Activated B cell treated with CpG ODN at 0.5 μM for 24 hours (primary cell): ENCODE measurements at regions of chr11 and their contacts with region 1.

Region 1: DNA sequence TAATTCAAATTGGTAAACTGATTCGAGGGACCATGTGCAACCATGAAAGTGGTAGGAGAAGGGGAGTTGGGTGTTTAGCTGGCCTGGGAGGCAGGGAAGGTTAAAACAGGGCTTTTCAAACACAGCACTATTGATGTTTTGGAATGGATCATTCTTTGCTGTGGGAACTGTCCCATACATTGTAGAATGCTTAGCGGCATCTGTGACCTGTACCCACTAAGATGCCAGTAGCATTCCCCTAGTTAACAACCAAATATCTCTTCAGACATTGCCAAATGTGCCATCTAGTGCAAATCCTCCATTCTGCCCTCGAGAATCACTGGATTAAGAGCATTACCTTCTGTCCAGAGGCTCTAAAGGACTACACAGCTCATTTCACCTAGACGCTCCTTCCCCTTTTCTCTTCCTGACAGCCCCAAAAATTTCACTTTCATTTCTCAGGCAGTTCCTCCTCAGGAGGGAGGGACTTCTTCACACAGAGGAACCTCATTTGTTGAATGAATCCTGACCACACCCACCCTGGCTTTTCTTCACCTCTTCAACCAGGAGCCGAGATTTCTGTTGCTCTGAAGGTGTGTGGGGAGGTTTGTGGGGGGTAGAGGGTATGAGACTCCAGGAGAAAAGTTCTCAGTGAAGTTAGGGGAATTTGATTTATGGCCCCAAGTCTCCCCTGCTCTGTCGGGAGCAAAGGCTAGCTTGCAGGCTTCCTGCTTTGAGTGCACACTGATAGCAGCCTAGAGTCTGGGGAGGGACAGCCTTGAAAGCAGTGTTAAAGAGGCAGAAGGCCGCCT is at the start of gene TRIM34:
- DNase-seq: peak; percentile 35
- ATAC-seq: peak; percentile 98
- H3K4me3 Mint-ChIP-seq: peak within 1 kb of the TSS; percentile 94
- H3K27ac Mint-ChIP-seq: peak within 1 kb of the TSS; percentile 96
- H3K4me1 Mint-ChIP-seq: peaks cover 46% of the 10 kb centered on the region
- H3K27me3 Mint-ChIP-seq: no peaks in the 10 kb centered on the region
- CTCF ChIP-seq: no peak
- total RNA-seq, gene TRIM34: 25.9 and 28.7 TPM in 2 replicates

Region 2: DNA sequence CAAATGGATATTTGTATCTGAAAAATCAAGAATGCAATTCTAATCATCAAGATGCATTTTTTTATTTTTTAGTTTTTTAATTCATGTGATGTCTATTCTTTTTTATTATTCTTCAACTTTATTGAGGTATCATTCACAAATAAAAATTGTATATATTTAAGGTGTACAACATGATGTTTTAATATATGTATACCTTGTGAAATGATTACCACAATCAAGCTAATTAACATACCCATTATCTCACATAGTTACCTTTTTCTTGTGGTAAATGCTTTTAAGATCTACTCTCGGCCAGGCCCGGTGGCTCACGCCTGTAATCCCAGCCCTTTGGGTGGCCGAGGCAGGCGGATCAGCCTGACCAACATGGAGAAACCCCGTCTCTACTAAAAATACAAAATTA is 401.5 kb before region 1 on chr11:
- CTCF ChIA-PET with region 1: no interaction called
- POLR2A ChIA-PET with region 1: no interaction called
- intact Hi-C with region 1: no loop called
- DNase-seq: no peak
- ATAC-seq: no peak
- H3K4me3 Mint-ChIP-seq: no peak overlapping the region
- H3K27ac Mint-ChIP-seq: no peak overlapping the region
- H3K4me1 Mint-ChIP-seq: no peaks in the 10 kb centered on the region
- H3K27me3 Mint-ChIP-seq: peaks cover 2% of the 10 kb centered on the region
- CTCF ChIP-seq: no peak

Region 3: DNA sequence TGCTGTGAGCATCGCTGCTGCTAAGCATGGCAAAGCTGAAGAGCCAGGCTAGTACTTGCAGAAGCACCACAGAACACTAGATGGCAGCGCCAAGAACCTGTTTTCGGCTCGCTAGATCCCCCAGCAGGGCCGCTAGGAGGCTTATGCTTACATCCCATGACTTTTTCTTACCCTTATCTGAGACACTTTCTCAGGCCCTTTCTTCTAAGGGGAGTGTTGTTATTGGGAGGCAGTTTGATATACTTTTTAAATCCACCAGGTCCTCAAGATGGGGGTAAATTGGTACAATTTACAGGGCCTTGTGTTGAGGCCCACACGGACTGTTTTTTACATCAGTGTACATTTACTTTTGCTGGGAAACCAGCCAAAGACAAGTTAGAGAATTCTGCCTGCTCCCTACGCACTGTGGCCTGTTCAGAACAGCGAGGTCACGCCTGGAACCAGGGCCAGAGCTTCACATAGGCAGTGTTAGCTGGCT is 24.3 kb before region 1 on chr11:
- CTCF ChIA-PET with region 1: no interaction called
- POLR2A ChIA-PET with region 1: interaction called, 3 read pairs
- intact Hi-C with region 1: loop called (anchors 1 kb)
- DNase-seq: peak; percentile 25
- ATAC-seq: peak; percentile 95
- H3K4me3 Mint-ChIP-seq: no peak overlapping the region
- H3K27ac Mint-ChIP-seq: no peak overlapping the region
- H3K4me1 Mint-ChIP-seq: peaks cover 17% of the 10 kb centered on the region
- H3K27me3 Mint-ChIP-seq: peaks cover 3% of the 10 kb centered on the region
- CTCF ChIP-seq: no peak

Region 4: GRCh38 chr11:5899519-5899918 is 274.8 kb after region 1 on chr11:
- CTCF ChIA-PET with region 1: no interaction called
- POLR2A ChIA-PET with region 1: no interaction called
- intact Hi-C with region 1: no loop called
- DNase-seq: no peak
- ATAC-seq: no peak
- H3K4me3 Mint-ChIP-seq: no peak overlapping the region
- H3K27ac Mint-ChIP-seq: no peak overlapping the region
- H3K4me1 Mint-ChIP-seq: no peaks in the 10 kb centered on the region
- H3K27me3 Mint-ChIP-seq: no peaks in the 10 kb centered on the region
- CTCF ChIP-seq: no peak

Region 5: GRCh38 chr11:6234387-6235107 is 609.9 kb after region 1 on chr11 and contains the start of gene FHIP1B:
- CTCF ChIA-PET with region 1: no interaction called
- POLR2A ChIA-PET with region 1: no interaction called
- intact Hi-C with region 1: loop called (anchors 5 kb)
- DNase-seq: peak; percentile 95
- ATAC-seq: peak; percentile 93
- H3K4me3 Mint-ChIP-seq: peak within 1 kb of the TSS; percentile 99
- H3K27ac Mint-ChIP-seq: peak within 1 kb of the TSS; percentile 92
- H3K4me1 Mint-ChIP-seq: peaks cover 32% of the 10 kb centered on the region
- H3K27me3 Mint-ChIP-seq: peaks cover 3% of the 10 kb centered on the region
- CTCF ChIP-seq: no peak
- total RNA-seq, gene FHIP1B: 27.7 and 32.8 TPM in 2 replicates

Region 6: DNA sequence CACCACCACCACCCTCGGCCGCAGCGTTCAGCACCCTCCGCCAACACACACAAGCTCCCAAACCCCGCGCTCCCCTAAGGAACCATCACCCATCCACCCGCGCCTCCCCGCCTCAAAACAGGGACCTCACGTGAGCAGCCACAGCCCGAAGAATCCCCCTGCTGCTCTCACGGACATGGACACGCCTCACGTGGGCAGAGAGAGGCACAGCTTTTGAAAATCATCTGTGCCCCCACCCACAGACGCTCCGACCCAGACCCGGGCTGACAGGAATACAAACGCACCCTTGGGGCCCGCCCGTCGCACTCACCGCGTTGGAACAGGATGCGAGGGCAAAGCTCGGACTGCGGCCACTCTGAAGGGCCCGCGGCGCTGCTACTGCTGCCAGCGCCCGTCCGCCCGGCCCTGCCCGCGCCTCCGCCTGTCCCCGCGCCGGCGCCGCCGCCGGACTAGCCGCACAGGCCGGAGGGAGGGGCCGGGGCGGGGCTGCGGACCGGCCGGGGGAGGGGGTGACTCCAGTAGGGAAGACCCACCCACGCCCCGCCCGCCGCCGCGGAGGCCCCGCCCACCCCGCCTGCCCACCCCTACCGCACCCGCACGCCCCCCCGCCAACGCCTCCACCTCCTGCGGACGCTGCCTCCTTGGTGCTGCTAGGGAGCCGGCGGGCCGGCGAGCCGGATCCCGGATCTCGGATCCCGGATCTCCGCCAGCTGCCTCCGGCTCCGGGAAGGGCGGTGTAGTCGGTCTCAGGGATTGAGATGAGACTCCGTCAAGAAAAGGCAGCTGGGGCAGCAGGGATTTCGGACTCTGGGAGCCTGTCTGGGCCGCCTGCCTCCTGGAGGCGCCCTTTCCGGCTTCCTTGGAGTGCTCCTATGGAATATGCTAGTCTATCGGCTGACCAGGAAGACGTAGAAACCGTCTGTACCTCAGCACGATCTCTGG is 849.1 kb after region 1 on chr11 and contains the start of gene TRIM3:
- CTCF ChIA-PET with region 1: no interaction called
- POLR2A ChIA-PET with region 1: no interaction called
- intact Hi-C with region 1: loop called (anchors 10 kb)
- DNase-seq: peak; percentile 75
- ATAC-seq: peak; percentile 91
- H3K4me3 Mint-ChIP-seq: peak within 1 kb of the TSS; percentile 86
- H3K27ac Mint-ChIP-seq: peak within 1 kb of the TSS; percentile 82
- H3K4me1 Mint-ChIP-seq: peaks cover 17% of the 10 kb centered on the region
- H3K27me3 Mint-ChIP-seq: no peaks in the 10 kb centered on the region
- CTCF ChIP-seq: no peak
- total RNA-seq, gene TRIM3: 8.3 and 9.0 TPM in 2 replicates